Activated CD4-positive, alpha-beta memory T cell treated with anti-CD3 and anti-CD28 coated beads, Interleukin-2, amount 10 ng/mL, durations not matched to agents 7 days and 5 days (primary cell): ENCODE measurements at regions of chr15 and their contacts with region 1.

Region 1: DNA sequence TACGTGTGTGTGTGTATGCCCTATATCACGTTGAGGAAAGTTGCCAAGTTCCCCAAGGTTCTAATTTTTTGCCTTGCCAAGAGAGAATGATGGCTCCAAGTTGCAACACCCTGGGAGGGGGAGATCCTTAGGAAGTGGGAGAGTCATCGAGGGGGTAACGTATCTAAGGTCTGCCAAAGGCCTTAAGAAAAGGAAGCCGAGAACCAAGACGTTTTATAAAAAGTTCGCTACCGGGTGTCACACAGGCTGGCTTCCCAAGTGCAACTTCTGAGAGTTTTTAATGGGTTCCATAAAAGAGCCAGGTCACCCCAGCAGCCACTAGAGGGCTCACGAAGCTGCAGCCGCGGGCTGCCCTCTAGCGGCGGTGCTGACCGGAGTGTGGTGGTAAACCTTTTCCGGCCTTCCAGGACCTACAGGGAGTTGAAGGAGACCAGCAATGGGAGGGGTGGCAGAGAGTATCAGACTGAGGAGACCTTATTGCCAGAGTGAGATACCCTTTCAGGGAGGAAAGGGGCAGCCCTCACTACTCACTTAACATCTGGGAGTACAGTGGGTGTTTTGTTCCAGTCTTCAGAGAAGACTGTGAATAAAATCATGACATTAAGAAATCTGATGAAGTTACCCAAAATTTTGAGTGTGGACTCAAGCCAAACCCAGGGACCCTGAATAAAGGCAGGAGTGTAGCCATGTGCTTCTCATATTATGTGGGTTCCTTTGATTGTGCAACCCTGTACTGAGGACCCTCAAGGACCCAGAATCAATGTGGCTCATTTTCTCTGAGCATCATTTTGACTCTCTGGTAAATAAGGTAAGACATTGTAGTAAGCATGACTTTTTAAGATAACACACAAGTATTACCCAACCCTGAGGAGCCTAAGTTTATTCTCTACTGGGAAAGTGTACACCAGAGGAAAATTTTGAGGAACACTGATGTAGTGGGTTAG is 2.5 kb upstream of the RFX7 start:
- DNase-seq: peak; percentile 90
- H3K4me3 Mint-ChIP-seq: peak overlapping the region; percentile 99
- H3K27ac Mint-ChIP-seq: peak overlapping the region; percentile 91
- H3K4me1 Mint-ChIP-seq: peaks cover 32% of the 10 kb centered on the region
- H3K27me3 Mint-ChIP-seq: peaks cover 2% of the 10 kb centered on the region

Region 2: DNA sequence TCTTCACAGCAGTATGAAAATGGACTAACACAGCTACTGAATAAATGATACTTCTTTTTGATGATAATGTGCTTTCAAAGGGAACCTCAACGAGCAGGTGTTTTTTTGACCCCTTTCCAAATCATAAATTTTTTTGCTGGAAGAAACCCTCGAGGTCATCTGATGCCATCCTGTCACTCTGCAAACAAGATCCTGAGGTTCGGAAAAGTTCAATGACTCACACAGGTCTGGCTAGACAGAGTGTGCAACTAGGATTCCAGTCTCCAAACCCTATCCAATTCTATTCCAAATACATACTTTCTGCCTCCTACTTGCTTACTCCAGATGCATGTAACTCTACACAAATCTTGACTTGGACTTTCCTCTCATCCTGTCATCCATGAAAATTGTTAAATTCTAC is 377.4 kb before region 1 on chr15:
- CTCF ChIA-PET with region 1: no interaction called
- POLR2A ChIA-PET with region 1: no interaction called
- DNase-seq: no peak
- H3K4me3 Mint-ChIP-seq: no peak overlapping the region
- H3K27ac Mint-ChIP-seq: no peak overlapping the region
- H3K4me1 Mint-ChIP-seq: peaks cover 4% of the 10 kb centered on the region
- H3K27me3 Mint-ChIP-seq: no peaks in the 10 kb centered on the region

Region 3: DNA sequence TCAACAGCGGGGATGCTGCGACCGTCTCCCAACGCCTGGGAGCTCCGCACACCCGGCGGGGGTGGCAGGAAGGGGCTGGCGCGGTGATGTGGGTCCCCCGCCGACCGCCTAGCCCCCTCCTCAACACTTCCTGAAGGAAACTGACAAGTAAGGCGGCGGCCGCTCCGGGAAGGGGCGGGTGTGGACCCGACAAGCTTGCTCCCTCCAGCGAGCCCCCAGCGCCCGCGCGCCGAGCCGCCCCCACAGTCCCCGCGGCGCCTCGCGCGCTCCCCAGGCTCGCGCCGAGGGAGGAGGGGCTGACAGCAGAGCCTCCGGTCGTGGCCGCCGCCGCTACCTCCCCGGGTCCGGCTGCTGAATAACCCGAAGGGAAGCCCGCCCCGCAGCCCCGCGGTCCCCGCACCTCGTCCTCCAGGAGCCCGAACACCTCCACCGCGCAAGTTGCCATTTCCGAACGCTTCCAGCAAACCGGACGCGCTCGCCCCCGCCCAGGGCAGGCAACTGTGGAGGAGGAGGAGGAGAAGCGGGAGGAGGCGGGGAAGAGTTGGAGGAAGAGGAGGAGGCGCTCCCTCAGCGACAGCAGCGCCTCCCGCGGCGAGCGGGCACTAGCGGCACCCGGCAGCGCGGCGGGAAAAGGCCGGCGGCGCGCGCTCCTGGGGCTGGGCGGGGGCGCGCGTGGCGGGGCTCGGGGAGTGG is 252.9 kb before region 1 on chr15 and contains the start of gene NEDD4:
- CTCF ChIA-PET with region 1: interaction called, 18 read pairs
- POLR2A ChIA-PET with region 1: interaction called, 4 read pairs
- DNase-seq: peak; percentile 77
- H3K4me3 Mint-ChIP-seq: peak within 1 kb of the TSS; percentile 83
- H3K27ac Mint-ChIP-seq: peak within 1 kb of the TSS; percentile 54
- H3K4me1 Mint-ChIP-seq: peaks cover 19% of the 10 kb centered on the region
- H3K27me3 Mint-ChIP-seq: peaks cover 19% of the 10 kb centered on the region
- total RNA-seq, gene NEDD4: 9.8 to 13.0 TPM

Region 4: GRCh38 chr15:56058986-56059385 is 187.2 kb before region 1 on chr15:
- CTCF ChIA-PET with region 1: no interaction called
- POLR2A ChIA-PET with region 1: no interaction called
- DNase-seq: no peak
- H3K4me3 Mint-ChIP-seq: no peak overlapping the region
- H3K27ac Mint-ChIP-seq: no peak overlapping the region
- H3K4me1 Mint-ChIP-seq: no peaks in the 10 kb centered on the region
- H3K27me3 Mint-ChIP-seq: peaks cover 2% of the 10 kb centered on the region

Region 5: GRCh38 chr15:56234804-56235203 is 11.3 kb before region 1 on chr15:
- CTCF ChIA-PET with region 1: interaction called, 5 read pairs
- POLR2A ChIA-PET with region 1: interaction called, 12 read pairs
- DNase-seq: no peak
- H3K4me3 Mint-ChIP-seq: no peak overlapping the region
- H3K27ac Mint-ChIP-seq: no peak overlapping the region
- H3K4me1 Mint-ChIP-seq: peaks cover 15% of the 10 kb centered on the region
- H3K27me3 Mint-ChIP-seq: no peaks in the 10 kb centered on the region

Region 6: DNA sequence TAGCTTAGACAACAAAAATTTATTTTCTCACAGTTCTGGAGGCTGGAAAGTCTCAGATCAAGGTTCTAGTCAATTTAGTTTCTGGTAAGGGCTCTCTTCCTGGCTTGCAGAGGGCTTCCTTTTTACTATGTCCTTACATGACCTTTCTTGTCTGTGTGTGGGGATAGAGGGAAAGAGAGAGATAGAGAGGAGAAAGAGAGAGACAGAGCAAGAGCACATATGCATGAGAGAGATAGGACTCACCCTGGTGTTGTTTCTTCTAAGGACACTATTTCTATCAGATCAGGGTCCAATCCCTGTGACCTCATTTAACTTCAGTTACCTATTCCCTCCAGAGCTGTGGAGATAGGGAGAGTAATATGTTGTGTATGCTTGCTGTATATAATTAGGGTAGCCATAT is 74.2 kb after region 1 on chr15:
- CTCF ChIA-PET with region 1: no interaction called
- POLR2A ChIA-PET with region 1: no interaction called
- DNase-seq: no peak
- H3K4me3 Mint-ChIP-seq: no peak overlapping the region
- H3K27ac Mint-ChIP-seq: no peak overlapping the region
- H3K4me1 Mint-ChIP-seq: no peaks in the 10 kb centered on the region
- H3K27me3 Mint-ChIP-seq: no peaks in the 10 kb centered on the region

Region 7: DNA sequence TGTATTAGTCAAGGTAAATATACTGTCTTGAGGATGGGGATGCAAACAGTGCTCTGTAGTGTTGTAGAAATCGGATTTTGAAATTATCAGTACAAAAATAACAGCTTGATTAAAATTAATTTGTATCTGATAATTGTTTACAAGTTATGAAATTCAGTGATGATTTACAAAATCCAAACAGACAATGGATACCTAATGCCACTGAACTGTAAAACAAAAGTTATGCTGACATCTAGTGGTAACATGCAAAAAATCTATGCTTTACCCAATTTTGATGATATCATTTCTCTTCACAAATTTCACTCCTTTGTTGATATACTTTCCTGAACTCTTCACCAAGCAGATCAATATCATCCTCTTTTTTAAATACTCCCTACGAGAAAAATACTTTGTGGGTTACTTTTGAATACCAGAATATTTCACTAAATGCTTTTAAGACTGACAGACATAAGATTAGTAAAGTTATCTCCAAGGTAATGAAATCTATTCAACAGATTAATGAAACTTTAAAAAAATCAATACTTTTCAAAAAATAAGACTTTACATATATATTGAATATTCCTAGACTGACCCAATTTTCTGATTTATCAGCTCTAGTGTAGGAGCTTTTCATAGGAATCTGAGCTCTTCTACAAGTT is 182.8 kb after region 1 on chr15:
- CTCF ChIA-PET with region 1: interaction called, 12 read pairs
- POLR2A ChIA-PET with region 1: no interaction called
- DNase-seq: no peak
- H3K4me3 Mint-ChIP-seq: no peak overlapping the region
- H3K27ac Mint-ChIP-seq: no peak overlapping the region
- H3K4me1 Mint-ChIP-seq: no peaks in the 10 kb centered on the region
- H3K27me3 Mint-ChIP-seq: no peaks in the 10 kb centered on the region